HCT116 (cell line): ENCODE measurements at regions of chr17 and their contacts with region 1.

Region 1: GRCh38 chr17:81553018-81553615 is 964 bp upstream of the FAAP100 start:
- DNase-seq: peak; percentile 80
- ATAC-seq: peak; percentile 80
- H3K4me3 ChIP-seq: peak overlapping the region; percentile 94 to 96
- H3K27ac ChIP-seq: peak overlapping the region; percentile 86
- H3K4me1 ChIP-seq: peaks cover 17 to 46% of the 10 kb centered on the region in 2 experiments
- H3K27me3 ChIP-seq: no peaks in the 10 kb centered on the region
- CTCF ChIP-seq: peak in 2 of 3 experiments; percentile 21 to 44; a peak in 3 of 6 replicates
- POLR2A ChIP-seq: peak; percentile 48
- RAD21 ChIP-seq: no peak

Region 2: DNA sequence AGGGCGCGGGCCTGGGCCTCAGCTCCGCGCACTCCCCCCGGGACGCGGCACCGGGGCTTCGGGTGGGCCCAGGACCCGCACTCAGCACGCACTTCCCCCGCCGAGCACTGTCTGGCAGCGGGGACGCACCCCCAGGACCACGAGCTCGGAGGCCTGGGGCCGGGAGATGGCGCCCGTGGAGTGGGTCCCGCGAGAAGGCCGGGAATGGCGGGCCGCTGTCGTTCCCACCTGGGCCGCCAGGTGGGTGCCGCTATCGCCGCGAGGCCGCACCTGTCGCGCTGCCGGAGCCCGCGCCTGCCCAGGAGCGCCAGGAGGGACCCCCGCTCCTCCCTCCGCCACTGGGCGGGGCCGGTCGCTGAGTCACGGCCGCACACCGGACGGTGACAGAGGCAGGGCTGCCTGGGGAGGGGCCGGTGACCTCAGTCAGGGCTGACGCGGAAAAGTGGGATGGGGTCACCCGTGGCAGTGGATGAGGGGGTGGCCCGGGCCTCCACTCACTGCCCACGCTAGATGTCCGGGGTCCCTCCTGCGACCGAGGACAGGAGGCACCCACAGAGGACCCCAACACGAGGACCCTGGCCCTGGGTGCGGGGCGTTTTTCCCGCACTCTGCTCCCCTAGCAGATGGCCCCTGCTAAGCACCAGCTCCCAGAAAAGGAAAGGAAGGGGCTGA is 33.7 kb before region 1 on chr17:
- CTCF ChIA-PET with region 1: no interaction called
- POLR2A ChIA-PET with region 1: interaction called, 12 read pairs
- RAD21 ChIA-PET with region 1: no interaction called
- intact Hi-C with region 1: no loop called
- DNase-seq: peak; percentile 80
- ATAC-seq: peak; percentile 69
- H3K4me3 ChIP-seq: peak overlapping the region; percentile 56 to 77
- H3K27ac ChIP-seq: peak overlapping the region; percentile 98
- H3K4me1 ChIP-seq: peaks cover 34 to 62% of the 10 kb centered on the region in 2 experiments
- H3K27me3 ChIP-seq: no peaks in the 10 kb centered on the region
- CTCF ChIP-seq: peak in 2 of 3 experiments; percentile 71 to 72; a peak in 4 of 6 replicates
- POLR2A ChIP-seq: peak; percentile 18
- RAD21 ChIP-seq: no peak

Region 3: GRCh38 chr17:81666342-81667191 is 113.5 kb after region 1 on chr17 and contains the starts of genes CCDC137 and OXLD1:
- CTCF ChIA-PET with region 1: no interaction called
- POLR2A ChIA-PET with region 1: no interaction called
- RAD21 ChIA-PET with region 1: no interaction called
- intact Hi-C with region 1: no loop called
- DNase-seq: peak; percentile 94
- ATAC-seq: peak; percentile 86
- H3K4me3 ChIP-seq: peak within 1 kb of the TSS; percentile 78 to 84
- H3K27ac ChIP-seq: peak within 1 kb of the TSS; percentile 86
- H3K4me1 ChIP-seq: peaks cover 40 to 48% of the 10 kb centered on the region in 2 experiments
- H3K27me3 ChIP-seq: no peaks in the 10 kb centered on the region
- CTCF ChIP-seq: no peak
- POLR2A ChIP-seq: peak; percentile 93
- RAD21 ChIP-seq: no peak
- total RNA-seq, gene CCDC137: 77.5 TPM
- total RNA-seq, gene OXLD1: 75.9 TPM

Region 4: GRCh38 chr17:81693509-81694210 is 140.5 kb after region 1 on chr17:
- CTCF ChIA-PET with region 1: no interaction called
- POLR2A ChIA-PET with region 1: no interaction called
- RAD21 ChIA-PET with region 1: no interaction called
- intact Hi-C with region 1: loop called (anchors 10 kb)
- DNase-seq: no peak
- ATAC-seq: peak; percentile 65
- H3K4me3 ChIP-seq: no peak overlapping the region
- H3K27ac ChIP-seq: no peak overlapping the region
- H3K4me1 ChIP-seq: no peaks in the 10 kb centered on the region; a peak in 1 of 4 replicates
- H3K27me3 ChIP-seq: no peaks in the 10 kb centered on the region
- CTCF ChIP-seq: peak in 2 of 3 experiments; percentile 39 to 53; a peak in 4 of 6 replicates
- POLR2A ChIP-seq: no peak
- RAD21 ChIP-seq: no peak

Region 5: GRCh38 chr17:82332669-82333278 is 779.7 kb after region 1 on chr17:
- CTCF ChIA-PET with region 1: no interaction called
- POLR2A ChIA-PET with region 1: no interaction called
- RAD21 ChIA-PET with region 1: no interaction called
- intact Hi-C with region 1: no loop called
- DNase-seq: peak; percentile 38
- ATAC-seq: peak; percentile 48
- H3K4me3 ChIP-seq: peak overlapping the region; percentile 65 to 72
- H3K27ac ChIP-seq: peak overlapping the region; percentile 89
- H3K4me1 ChIP-seq: peaks cover 65 to 98% of the 10 kb centered on the region in 2 experiments
- H3K27me3 ChIP-seq: no peaks in the 10 kb centered on the region
- CTCF ChIP-seq: peak in 2 of 3 experiments; percentile 13 to 21; a peak in 1 of 6 replicates
- POLR2A ChIP-seq: no peak
- RAD21 ChIP-seq: no peak